ENCODE measurements at regions of chr5 and their contacts with region 1.

Region 1: DNA sequence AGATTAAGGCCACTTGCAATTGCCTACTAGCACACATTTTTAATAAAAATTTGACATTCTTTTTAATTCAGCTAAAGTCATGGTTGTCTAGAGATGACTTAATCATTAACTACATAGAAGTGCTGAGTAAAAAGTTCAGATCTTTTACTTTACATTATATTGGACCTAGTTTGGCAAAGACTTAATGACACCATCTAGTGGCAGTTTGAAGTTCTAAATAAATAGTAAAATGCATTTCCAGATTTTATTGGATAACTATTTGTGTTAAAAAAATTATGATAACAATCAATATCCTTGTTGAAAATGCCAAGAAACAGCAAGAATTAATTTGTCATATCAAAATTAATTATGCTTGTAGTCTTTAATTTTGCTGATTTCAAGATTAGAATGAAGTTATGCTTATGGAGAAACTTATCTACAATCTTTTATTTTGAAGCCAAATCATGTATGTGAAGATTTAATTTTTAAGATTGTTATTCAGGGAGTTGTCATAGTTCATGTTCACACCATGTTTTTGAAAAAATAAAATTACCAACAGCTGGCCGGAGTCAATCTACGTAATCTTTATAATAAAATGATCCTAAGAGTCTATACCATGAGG is 69.6 kb upstream of the PJA2 start:
- DNase-seq: no peak
- H3K4me3 Mint-ChIP-seq: no peak overlapping the region
- H3K27ac Mint-ChIP-seq: no peak overlapping the region
- H3K4me1 Mint-ChIP-seq: no peaks in the 10 kb centered on the region
- H3K27me3 Mint-ChIP-seq: peaks cover 11% of the 10 kb centered on the region

Region 2: DNA sequence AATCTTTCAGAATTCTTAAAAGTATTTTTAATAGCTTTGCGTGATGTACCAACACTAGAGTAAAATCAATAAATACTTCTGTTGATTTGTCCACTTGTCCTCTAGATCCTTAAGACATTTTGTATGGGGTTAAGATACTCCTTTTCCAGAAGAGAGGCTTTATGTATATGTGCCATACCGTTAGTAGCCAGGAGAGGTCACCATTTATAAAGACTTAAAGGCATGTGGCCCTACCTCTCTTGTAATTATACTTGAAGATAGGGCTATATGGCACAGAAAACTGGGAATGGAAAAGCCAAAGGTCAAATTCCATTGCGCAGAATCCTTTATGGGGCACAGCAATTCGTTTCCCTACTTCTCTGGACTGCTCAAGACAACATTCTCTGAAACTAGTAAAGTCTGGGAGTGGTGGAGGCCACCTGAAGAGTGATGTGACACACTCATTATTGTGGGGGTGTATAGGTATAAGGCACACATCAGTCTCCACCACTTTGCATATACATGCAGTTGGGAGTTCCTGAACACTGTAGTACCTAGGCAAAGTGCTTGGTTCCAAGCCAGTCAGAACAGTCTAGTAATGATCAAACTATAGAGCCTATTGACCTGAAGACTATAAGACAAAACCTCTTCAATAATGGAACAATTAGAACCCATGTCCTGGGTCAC is 957.4 kb before region 1 on chr5:
- CTCF ChIA-PET with region 1: no interaction called
- POLR2A ChIA-PET with region 1: no interaction called
- intact Hi-C with region 1: loop called (anchors 5 kb)
- DNase-seq: no peak
- H3K4me3 Mint-ChIP-seq: no peak overlapping the region
- H3K27ac Mint-ChIP-seq: no peak overlapping the region
- H3K4me1 Mint-ChIP-seq: no peaks in the 10 kb centered on the region
- H3K27me3 Mint-ChIP-seq: peaks cover 5% of the 10 kb centered on the region

Region 3: GRCh38 chr5:108642167-108642906 is 837.0 kb before region 1 on chr5:
- CTCF ChIA-PET with region 1: interaction called, 8 read pairs
- POLR2A ChIA-PET with region 1: no interaction called
- intact Hi-C with region 1: loop called (anchors 1 kb)
- DNase-seq: peak; percentile 67
- H3K4me3 Mint-ChIP-seq: no peak overlapping the region
- H3K27ac Mint-ChIP-seq: no peak overlapping the region
- H3K4me1 Mint-ChIP-seq: peaks cover 2% of the 10 kb centered on the region
- H3K27me3 Mint-ChIP-seq: peaks cover 3% of the 10 kb centered on the region

Region 4: DNA sequence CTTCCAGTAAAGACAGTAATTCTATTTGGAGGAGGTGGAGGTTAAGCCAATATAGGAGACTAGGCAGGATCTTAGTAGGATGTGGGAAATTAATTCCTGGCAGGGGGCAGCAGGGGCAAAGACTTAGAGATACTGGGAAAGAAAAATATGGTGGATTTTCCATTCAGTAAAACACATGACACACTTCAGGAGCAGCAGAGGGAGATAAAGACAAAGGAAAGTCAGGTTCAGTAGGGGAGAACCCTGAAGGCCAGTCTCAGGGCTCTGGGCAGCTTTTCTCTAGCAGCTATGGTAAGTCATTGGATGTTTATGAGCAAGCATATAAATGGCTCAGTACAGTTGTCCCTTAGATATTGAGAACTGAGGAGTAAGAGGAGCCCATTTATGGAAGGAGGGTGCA is 175.1 kb before region 1 on chr5:
- CTCF ChIA-PET with region 1: no interaction called
- POLR2A ChIA-PET with region 1: no interaction called
- intact Hi-C with region 1: no loop called
- DNase-seq: no peak
- H3K4me3 Mint-ChIP-seq: no peak overlapping the region
- H3K27ac Mint-ChIP-seq: no peak overlapping the region
- H3K4me1 Mint-ChIP-seq: no peaks in the 10 kb centered on the region
- H3K27me3 Mint-ChIP-seq: no peaks in the 10 kb centered on the region

Region 5: DNA sequence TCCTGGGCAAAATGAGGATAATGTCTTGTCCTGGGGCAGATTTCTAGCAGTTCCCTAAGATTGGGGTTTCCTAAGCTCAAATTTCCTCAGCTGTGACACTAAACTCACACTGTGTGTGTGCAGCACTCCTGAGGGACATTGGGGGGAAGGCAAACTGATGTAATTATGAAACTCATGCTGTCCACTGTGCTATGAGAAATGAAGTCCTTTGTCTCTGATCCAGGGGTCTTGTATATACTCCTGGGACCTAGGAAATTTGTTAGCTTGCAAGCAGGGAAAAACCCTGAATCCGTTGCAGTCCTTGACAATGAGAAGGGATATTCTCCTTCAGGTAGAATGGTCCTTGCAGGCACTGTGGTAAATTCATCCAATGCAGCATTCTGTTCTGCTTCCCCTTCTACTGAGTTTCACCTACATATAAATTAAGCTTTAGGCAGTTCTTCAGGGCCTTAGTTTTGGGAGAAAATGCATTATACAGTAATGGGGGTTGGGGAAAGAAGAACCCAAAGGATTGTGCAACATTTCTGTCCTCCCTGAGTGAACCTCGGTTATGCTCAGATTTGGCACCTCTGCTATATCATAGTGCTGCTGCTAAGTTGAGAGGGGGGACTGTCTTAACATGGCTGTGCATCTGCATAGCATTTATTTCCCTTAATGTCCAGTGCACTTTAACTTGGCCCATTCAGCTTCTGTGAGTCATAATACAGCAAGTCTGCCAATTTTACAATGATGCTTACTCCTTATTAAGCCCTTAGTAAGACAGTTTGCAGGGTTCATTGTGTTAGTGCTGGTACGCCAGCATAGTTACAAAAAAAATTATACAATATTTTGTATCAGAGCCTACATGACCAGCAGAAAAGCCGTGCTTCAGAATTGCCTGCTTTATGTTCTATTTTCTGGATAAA is 149.8 kb before region 1 on chr5:
- CTCF ChIA-PET with region 1: no interaction called
- POLR2A ChIA-PET with region 1: no interaction called
- intact Hi-C with region 1: no loop called
- DNase-seq: no peak
- H3K4me3 Mint-ChIP-seq: no peak overlapping the region
- H3K27ac Mint-ChIP-seq: no peak overlapping the region
- H3K4me1 Mint-ChIP-seq: no peaks in the 10 kb centered on the region
- H3K27me3 Mint-ChIP-seq: no peaks in the 10 kb centered on the region

Region 6: GRCh38 chr5:109354761-109355160 is 124.6 kb before region 1 on chr5:
- CTCF ChIA-PET with region 1: no interaction called
- POLR2A ChIA-PET with region 1: no interaction called
- intact Hi-C with region 1: no loop called
- DNase-seq: no peak
- H3K4me3 Mint-ChIP-seq: no peak overlapping the region
- H3K27ac Mint-ChIP-seq: no peak overlapping the region
- H3K4me1 Mint-ChIP-seq: peaks cover 3% of the 10 kb centered on the region
- H3K27me3 Mint-ChIP-seq: no peaks in the 10 kb centered on the region

Region 7: DNA sequence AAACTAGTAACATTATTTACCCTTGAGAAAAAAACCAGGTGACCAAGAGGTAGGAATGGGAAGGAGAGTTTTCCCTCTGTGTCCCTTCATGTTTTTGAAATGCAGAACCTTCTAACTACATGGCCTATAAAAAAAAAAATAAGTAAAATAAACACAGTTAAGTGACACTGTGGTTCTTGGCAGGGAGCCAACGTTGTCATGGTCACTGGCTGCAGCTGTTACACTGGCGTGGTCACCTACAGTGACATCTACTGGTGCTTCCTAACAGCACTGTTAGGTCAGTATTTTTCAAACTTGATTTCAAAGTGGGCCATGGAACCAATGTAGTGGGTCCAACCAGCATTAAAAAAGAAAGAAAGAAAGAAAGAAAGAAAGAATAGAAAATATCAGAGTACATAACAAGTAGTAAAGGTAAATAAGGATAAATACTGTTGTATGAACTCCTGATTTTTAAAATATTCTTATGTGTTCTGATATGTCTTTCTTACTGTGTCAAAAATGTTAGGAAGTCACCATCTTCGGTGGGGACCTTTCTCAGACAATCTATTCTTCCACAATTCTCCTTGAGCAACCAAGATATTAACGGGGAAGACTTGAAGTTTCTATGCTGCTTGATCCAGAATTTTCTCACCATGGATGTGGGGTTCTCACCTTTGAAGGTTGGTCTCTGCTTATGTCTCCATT is 10.5 kb before region 1 on chr5:
- CTCF ChIA-PET with region 1: interaction called, 10 read pairs
- POLR2A ChIA-PET with region 1: no interaction called
- intact Hi-C with region 1: no loop called
- DNase-seq: peak; percentile 84
- H3K4me3 Mint-ChIP-seq: no peak overlapping the region
- H3K27ac Mint-ChIP-seq: no peak overlapping the region
- H3K4me1 Mint-ChIP-seq: peaks cover 3% of the 10 kb centered on the region
- H3K27me3 Mint-ChIP-seq: peaks cover 6% of the 10 kb centered on the region

Region 8: DNA sequence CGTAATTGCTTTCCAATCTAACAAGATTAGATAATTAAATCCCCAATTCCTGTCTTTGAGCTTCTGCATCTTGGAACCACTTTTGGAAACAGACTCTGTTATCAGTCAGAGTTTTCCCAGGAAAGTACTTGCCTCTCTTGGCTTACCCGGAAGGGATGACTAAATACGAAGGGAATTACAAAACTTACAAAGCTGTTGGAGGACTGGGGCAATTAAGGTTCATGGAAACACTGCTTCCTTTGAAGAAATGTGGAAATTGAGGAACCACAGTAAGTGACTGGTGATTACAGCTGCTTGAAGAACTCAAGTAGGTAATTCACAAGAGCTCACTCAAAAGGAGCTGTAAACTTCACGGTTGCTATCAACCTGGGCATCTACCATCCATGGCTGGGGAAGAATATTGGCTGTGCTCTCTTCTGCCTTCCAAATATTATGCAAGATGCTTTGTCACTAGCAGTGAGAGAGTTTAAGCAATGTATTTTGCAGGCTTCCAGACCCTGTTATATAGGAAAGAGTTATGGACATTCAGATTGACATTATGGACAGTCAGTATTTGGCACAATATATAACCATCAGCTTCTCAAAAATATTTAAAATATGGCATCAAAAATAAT is 105.7 kb after region 1 on chr5:
- CTCF ChIA-PET with region 1: no interaction called
- POLR2A ChIA-PET with region 1: no interaction called
- intact Hi-C with region 1: no loop called
- DNase-seq: no peak
- H3K4me3 Mint-ChIP-seq: no peak overlapping the region
- H3K27ac Mint-ChIP-seq: no peak overlapping the region
- H3K4me1 Mint-ChIP-seq: no peaks in the 10 kb centered on the region
- H3K27me3 Mint-ChIP-seq: peaks cover 6% of the 10 kb centered on the region